ENCODE measurements at regions of chr12 and their contacts with region 1.

Region 1: GRCh38 chr12:81450920-81451739 is 308.0 kb downstream of the PPFIA2 start:
- DNase-seq: peak; percentile 54
- H3K4me3 ChIP-seq: no peak overlapping the region
- H3K27ac ChIP-seq: no peak overlapping the region
- H3K4me1 ChIP-seq: no peaks in the 10 kb centered on the region
- H3K27me3 ChIP-seq: no peaks in the 10 kb centered on the region
- CTCF ChIP-seq: peak; percentile 53 to 57
- POLR2A ChIP-seq: no peak

Region 2: DNA sequence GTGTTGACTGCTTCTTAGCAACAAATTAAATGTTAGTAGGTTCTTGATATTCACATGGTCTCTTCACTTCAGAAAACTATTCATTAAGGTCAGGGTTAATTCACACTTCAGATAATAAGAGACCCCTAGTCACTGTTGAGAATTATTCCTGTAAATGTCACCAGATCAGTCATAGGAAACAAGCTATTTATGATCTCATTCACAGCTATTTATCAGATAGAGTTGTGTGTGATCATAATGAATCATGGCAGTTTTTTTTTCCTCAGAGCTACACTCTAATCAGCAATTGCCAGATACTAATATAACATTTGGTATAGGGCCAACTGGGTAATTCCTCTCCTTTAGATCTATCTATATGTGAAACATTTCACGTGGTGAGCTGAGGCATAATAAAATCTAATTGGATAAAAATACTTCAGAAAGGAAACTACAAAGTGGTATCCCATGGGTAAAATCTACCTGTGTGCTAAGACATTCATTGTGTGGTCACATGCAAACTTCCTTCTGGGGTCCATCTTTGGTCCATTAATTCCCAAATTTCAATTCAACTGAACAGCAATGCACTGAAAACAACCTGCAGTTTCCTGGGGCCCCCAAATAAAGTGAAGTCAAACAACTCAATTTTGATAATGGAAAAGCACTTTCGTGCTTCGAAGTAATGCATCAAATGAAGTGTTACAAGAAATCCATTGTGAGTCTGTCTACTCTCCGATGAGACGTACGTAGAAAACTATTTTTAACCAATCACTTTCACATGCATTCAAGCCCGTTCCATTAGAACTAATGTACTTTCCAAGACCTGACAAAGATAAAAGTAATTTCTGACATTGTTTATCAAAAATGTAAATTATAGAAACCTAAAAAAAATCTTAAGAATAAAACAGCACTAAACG is 176.2 kb before region 1 on chr12:
- CTCF ChIA-PET with region 1: no interaction called
- POLR2A ChIA-PET with region 1: no interaction called
- dilution Hi-C with region 1: no loop called
- intact Hi-C with region 1: loop called (anchors 10 kb)
- DNase-seq: peak; percentile 22
- H3K4me3 ChIP-seq: no peak overlapping the region
- H3K27ac ChIP-seq: no peak overlapping the region
- H3K4me1 ChIP-seq: no peaks in the 10 kb centered on the region
- H3K27me3 ChIP-seq: peaks cover 0 to 13% of the 10 kb centered on the region in 2 experiments
- CTCF ChIP-seq: no peak
- POLR2A ChIP-seq: no peak

Region 3: DNA sequence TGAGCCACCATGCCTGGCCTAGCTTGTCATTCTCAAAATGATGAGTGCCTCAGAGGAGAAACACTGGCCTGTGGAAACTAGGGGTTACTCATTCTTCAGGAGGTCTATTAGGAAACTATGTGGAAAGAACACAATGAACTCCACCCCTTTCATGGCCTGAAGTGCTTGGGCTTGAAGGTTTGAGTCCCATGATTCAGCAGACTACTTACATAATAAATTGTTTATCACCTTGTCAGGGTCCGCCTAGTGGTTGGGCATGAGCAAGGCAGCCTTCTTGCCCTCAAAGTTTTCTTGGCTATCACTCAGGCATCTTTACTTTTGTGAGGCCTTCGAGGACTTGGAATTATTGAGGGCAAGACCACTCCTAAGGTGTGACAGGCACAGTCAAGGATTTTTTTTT is 122.0 kb before region 1 on chr12:
- CTCF ChIA-PET with region 1: no interaction called
- POLR2A ChIA-PET with region 1: no interaction called
- dilution Hi-C with region 1: no loop called
- intact Hi-C with region 1: no loop called
- DNase-seq: peak; percentile 2
- H3K4me3 ChIP-seq: no peak overlapping the region
- H3K27ac ChIP-seq: no peak overlapping the region
- H3K4me1 ChIP-seq: no peaks in the 10 kb centered on the region
- H3K27me3 ChIP-seq: no peaks in the 10 kb centered on the region
- CTCF ChIP-seq: peak; percentile 30 to 39
- POLR2A ChIP-seq: no peak

Region 4: GRCh38 chr12:81517296-81517695 is 66.2 kb after region 1 on chr12:
- CTCF ChIA-PET with region 1: no interaction called
- POLR2A ChIA-PET with region 1: no interaction called
- dilution Hi-C with region 1: no loop called
- intact Hi-C with region 1: no loop called
- DNase-seq: no peak
- H3K4me3 ChIP-seq: no peak overlapping the region
- H3K27ac ChIP-seq: no peak overlapping the region
- H3K4me1 ChIP-seq: no peaks in the 10 kb centered on the region
- H3K27me3 ChIP-seq: no peaks in the 10 kb centered on the region
- CTCF ChIP-seq: no peak
- POLR2A ChIP-seq: no peak